Esophagus muscularis mucosa (tissue), 4 donors: ENCODE measurements at regions of chr11 and their contacts with region 1.

Region 1: GRCh38 chr11:128157423-128158298 is 429.7 kb downstream of the ETS1 start:
- DNase-seq: no peak
- H3K4me3 ChIP-seq: peak overlapping the region in 2 of 4 donors; percentile 16 to 38
- H3K27ac ChIP-seq: no peak overlapping the region
- H3K4me1 ChIP-seq: no peaks in the 10 kb centered on the region
- H3K27me3 ChIP-seq: no peaks in the 10 kb centered on the region
- CTCF ChIP-seq: peak; percentile 65 to 82 (median 71)
- EP300 ChIP-seq: no peak
- POLR2A ChIP-seq: no peak

Region 2: GRCh38 chr11:128026596-128026995 is 131.1 kb before region 1 on chr11:
- intact Hi-C with region 1: loop called (anchors 5 kb)
- DNase-seq: no peak
- H3K4me3 ChIP-seq: no peak overlapping the region
- H3K27ac ChIP-seq: no peak overlapping the region
- H3K4me1 ChIP-seq: no peaks in the 10 kb centered on the region
- H3K27me3 ChIP-seq: peaks cover 0 to 13% (median 0%) of the 10 kb centered on the region in 4 donors
- CTCF ChIP-seq: no peak
- EP300 ChIP-seq: no peak
- POLR2A ChIP-seq: no peak

Region 3: GRCh38 chr11:128472128-128473089 is 314.7 kb after region 1 on chr11:
- intact Hi-C with region 1: no loop called
- DNase-seq: no peak
- H3K4me3 ChIP-seq: no peak overlapping the region
- H3K27ac ChIP-seq: peak overlapping the region in 1 of 4 donors; percentile 16
- H3K4me1 ChIP-seq: peaks cover 81 to 95% (median 84%) of the 10 kb centered on the region in 4 donors
- H3K27me3 ChIP-seq: no peaks in the 10 kb centered on the region
- CTCF ChIP-seq: no peak
- EP300 ChIP-seq: no peak
- POLR2A ChIP-seq: no peak